WTC11 (cell line): ENCODE measurements at regions of chr2 and their contacts with region 1.

Region 1: GRCh38 chr2:24058564-24059271 is 9.2 kb downstream of the FKBP1B start:
- DNase-seq: no peak
- ATAC-seq: no peak
- H3K4me3 Mint-ChIP-seq: no peak overlapping the region
- H3K27ac Mint-ChIP-seq: no peak overlapping the region; the same call in 1 of the 2 replicates
- H3K4me1 Mint-ChIP-seq: no peaks in the 10 kb centered on the region; the same call in 1 of the 2 replicates
- H3K27me3 Mint-ChIP-seq: no peaks in the 10 kb centered on the region
- CTCF ChIP-seq: no peak

Region 2: DNA sequence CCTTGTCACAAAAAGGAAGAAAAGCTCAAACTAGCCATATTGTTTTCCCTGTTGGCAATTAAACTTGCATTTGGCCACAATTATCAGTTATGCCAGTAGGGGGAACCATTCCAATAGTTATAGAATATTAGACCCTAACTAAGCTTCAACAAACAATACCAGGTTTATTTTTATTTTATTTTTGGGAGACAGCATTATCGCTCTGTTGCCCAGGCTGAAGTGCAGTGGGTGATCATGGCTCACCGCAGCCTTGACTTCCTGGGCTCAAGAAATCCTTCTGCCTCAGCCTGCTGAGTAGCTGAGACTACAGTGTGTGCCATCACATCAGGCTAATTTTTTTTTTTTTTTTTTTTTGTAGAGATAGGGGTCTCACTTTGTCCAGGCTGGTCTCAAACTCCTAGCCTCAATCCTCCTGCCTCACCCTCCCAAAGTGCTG is 233.9 kb before region 1 on chr2:
- CTCF ChIA-PET with region 1: interaction called, 13 read pairs
- POLR2A ChIA-PET with region 1: no interaction called
- DNase-seq: no peak
- ATAC-seq: peak; percentile 52
- H3K4me3 Mint-ChIP-seq: no peak overlapping the region
- H3K27ac Mint-ChIP-seq: no peak overlapping the region
- H3K4me1 Mint-ChIP-seq: no peaks in the 10 kb centered on the region
- H3K27me3 Mint-ChIP-seq: no peaks in the 10 kb centered on the region
- CTCF ChIP-seq: peak; percentile 54

Region 3: DNA sequence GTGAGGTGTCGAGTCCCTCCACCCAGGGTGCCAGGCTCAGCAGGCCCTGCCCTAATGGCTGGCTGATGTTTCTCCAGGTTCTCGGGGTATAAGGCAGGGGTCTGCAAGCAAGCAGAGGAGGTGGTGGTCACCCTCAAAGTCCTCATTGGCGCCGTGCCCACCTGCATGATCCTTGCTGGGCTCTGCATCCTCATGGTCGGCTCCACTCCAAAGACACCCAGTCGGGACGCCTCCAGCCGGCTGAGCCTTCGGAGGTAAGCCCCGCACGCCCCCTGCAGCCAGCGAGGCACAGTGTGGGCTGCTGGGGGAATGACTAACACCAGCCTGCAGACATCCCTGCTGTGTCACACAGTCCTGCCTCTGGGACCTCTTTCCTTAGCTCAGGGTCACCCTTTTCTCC is 34.7 kb before region 1 on chr2:
- CTCF ChIA-PET with region 1: interaction called, 15 read pairs
- POLR2A ChIA-PET with region 1: no interaction called
- DNase-seq: peak; percentile 43
- ATAC-seq: peak; percentile 17
- H3K4me3 Mint-ChIP-seq: no peak overlapping the region
- H3K27ac Mint-ChIP-seq: peak overlapping the region; percentile 96
- H3K4me1 Mint-ChIP-seq: peaks cover 59% of the 10 kb centered on the region
- H3K27me3 Mint-ChIP-seq: no peaks in the 10 kb centered on the region
- CTCF ChIP-seq: no peak

Region 4: GRCh38 chr2:24046930-24047702 is 11.6 kb before region 1 on chr2 and contains the start of gene WDCP:
- CTCF ChIA-PET with region 1: interaction called, 17 read pairs
- POLR2A ChIA-PET with region 1: interaction called, 3 read pairs
- DNase-seq: peak; percentile 94
- ATAC-seq: peak; percentile 93
- H3K4me3 Mint-ChIP-seq: peak within 1 kb of the TSS; percentile 97
- H3K27ac Mint-ChIP-seq: peak within 1 kb of the TSS; percentile 92
- H3K4me1 Mint-ChIP-seq: peaks cover 26% of the 10 kb centered on the region
- H3K27me3 Mint-ChIP-seq: no peaks in the 10 kb centered on the region
- CTCF ChIP-seq: no peak
- total RNA-seq, gene WDCP: 30.5 to 33.6 TPM (median 31.9 TPM) in 3 replicates

Region 5: GRCh38 chr2:24075915-24076848 is 17.5 kb after region 1 on chr2 and contains the start of gene SF3B6:
- CTCF ChIA-PET with region 1: interaction called, 20 read pairs
- POLR2A ChIA-PET with region 1: no interaction called
- DNase-seq: peak; percentile 100
- ATAC-seq: peak; percentile 87
- H3K4me3 Mint-ChIP-seq: peak within 1 kb of the TSS; percentile 96
- H3K27ac Mint-ChIP-seq: peak within 1 kb of the TSS; percentile 99
- H3K4me1 Mint-ChIP-seq: peaks cover 21% of the 10 kb centered on the region
- H3K27me3 Mint-ChIP-seq: no peaks in the 10 kb centered on the region
- CTCF ChIP-seq: no peak
- total RNA-seq, gene SF3B6: 117 to 128 TPM (median 126 TPM) in 3 replicates

Region 6: DNA sequence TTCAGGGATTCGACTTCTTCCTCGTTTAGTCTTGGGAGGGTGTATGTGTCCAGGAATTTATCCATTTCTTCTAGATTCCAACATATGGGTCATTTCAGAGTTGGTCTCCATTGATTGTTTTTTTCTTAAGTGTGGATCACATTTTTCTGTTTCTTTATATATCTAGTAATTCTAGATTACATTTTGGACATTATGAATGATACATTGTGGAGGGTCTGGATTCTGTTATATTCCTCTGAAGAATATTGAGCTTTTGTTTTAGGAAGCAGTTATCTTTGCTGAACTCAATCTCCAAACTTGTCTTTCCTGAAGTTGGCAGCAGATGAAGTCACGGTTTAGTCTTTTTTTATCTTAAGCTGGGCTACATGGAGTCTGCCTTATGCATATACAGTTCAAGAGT is 73.8 kb after region 1 on chr2:
- CTCF ChIA-PET with region 1: no interaction called
- POLR2A ChIA-PET with region 1: no interaction called
- DNase-seq: no peak
- ATAC-seq: no peak
- H3K4me3 Mint-ChIP-seq: no peak overlapping the region
- H3K27ac Mint-ChIP-seq: no peak overlapping the region
- H3K4me1 Mint-ChIP-seq: no peaks in the 10 kb centered on the region
- H3K27me3 Mint-ChIP-seq: no peaks in the 10 kb centered on the region; the same call in 1 of the 2 replicates
- CTCF ChIP-seq: no peak

Region 7: DNA sequence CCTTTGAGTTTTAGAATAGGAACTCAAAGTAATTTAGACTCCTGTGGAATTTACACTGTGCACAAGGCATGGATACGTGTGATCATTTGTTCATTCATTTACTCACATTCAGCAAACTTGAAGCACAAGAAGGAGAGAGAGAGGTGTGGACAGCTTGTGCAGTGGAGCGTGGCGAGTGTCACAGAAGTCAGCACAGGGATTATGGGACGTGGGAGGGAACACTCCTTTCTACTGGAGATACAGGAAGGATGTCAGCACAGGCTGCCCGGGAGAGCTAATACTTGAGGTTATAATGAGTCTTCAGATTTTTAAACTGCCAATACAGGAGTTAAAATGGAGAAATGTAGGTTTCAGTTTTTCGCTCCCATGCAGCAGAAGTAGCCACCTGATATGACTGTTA is 123.1 kb after region 1 on chr2:
- CTCF ChIA-PET with region 1: no interaction called
- POLR2A ChIA-PET with region 1: no interaction called
- DNase-seq: no peak
- ATAC-seq: no peak
- H3K4me3 Mint-ChIP-seq: no peak overlapping the region
- H3K27ac Mint-ChIP-seq: no peak overlapping the region
- H3K4me1 Mint-ChIP-seq: no peaks in the 10 kb centered on the region
- H3K27me3 Mint-ChIP-seq: no peaks in the 10 kb centered on the region; the same call in 1 of the 2 replicates
- CTCF ChIP-seq: no peak